Stomach (tissue), 19 donors: ENCODE measurements at regions of chr9 and their contacts with region 1.

Region 1: GRCh38 chr9:2276296-2276695 is 261.1 kb downstream of the SMARCA2 start:
- DNase-seq: no peak
- H3K4me3 ChIP-seq: no peak overlapping the region
- H3K27ac ChIP-seq: no peak overlapping the region
- H3K4me1 ChIP-seq: no peaks in the 10 kb centered on the region
- H3K27me3 ChIP-seq: no peaks in the 10 kb centered on the region
- CTCF ChIP-seq: no peak
- EP300 ChIP-seq: no peak
- POLR2A ChIP-seq: no peak

Region 2: DNA sequence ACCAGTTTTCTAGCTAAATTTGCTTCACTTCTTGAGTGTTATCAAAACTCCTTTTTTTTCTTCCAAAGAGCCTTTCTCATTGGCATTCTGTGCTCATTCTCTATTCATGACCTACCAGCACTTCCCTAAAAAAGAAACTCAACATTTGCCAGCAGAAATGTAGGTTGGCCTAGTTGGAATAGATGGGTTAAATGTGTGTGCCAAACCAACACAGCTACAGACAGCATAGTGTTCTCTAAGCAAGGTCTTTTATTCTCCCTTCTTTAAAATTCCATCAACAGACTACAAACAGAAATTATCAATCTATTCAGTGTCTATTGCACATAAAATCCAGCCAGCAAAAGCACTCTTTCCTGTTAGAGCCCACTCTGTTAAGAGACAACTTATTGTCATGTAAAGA is 823.4 kb after region 1 on chr9:
- intact Hi-C with region 1: no loop called
- DNase-seq: no peak
- H3K4me3 ChIP-seq: no peak overlapping the region
- H3K27ac ChIP-seq: no peak overlapping the region
- H3K4me1 ChIP-seq: no peaks in the 10 kb centered on the region
- H3K27me3 ChIP-seq: no peaks in the 10 kb centered on the region
- CTCF ChIP-seq: no peak
- EP300 ChIP-seq: no peak
- POLR2A ChIP-seq: no peak

Region 3: DNA sequence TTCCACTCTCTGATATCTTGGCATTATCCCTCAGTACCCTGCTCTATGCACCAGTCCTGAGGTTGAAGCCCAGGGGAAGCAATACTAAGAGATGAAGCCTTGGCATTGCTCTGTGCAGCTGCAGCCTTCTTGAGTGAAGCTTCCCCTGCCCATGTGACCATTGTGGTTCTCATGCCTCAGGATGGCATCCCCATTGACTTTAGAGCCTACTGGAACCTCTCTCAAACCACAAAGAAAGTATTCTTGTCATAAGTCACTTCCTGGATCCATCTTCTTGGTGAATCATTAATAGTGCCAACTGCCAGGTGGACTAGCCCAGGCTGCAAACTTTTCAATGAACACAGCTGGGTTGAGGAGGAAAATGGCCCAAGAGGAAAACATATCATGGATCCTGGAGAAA is 1533.4 kb after region 1 on chr9:
- intact Hi-C with region 1: loop called (anchors 5 kb)
- DNase-seq: no peak
- H3K4me3 ChIP-seq: no peak overlapping the region
- H3K27ac ChIP-seq: no peak overlapping the region
- H3K4me1 ChIP-seq: no peaks in the 10 kb centered on the region
- H3K27me3 ChIP-seq: no peaks in the 10 kb centered on the region
- CTCF ChIP-seq: no peak
- EP300 ChIP-seq: no peak
- POLR2A ChIP-seq: no peak